ENCODE measurements at regions of chr3 and their contacts with region 1.

Region 1: DNA sequence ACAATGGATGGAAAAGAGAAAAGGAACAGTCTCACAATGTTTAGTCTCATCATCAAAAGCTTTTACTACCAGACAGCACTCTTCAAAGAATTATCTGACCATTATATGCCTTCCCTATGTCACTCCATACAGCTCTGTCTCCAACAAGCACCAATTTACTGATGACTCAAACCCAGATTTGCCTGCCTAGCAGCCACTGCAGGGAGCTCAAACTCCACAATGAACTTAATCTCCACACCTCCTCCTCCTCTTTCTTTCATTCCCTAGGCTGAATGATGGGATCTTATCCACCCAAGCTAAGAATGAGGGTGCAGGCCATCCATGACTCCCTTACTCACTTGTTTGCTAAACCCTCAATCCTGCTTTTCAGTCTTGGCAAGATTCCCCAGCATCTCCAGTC is 45.5 kb downstream of the NBEAL2 start:
- DNase-seq: no peak
- H3K4me3 ChIP-seq: no peak overlapping the region
- H3K27ac ChIP-seq: no peak overlapping the region
- H3K4me1 ChIP-seq: peaks cover 0 to 10% (median 3%) of the 10 kb centered on the region in 4 experiments
- H3K27me3 ChIP-seq: no peaks in the 10 kb centered on the region

Region 2: GRCh38 chr3:46998121-46998851 is 26.6 kb before region 1 on chr3:
- CTCF ChIA-PET with region 1: no interaction called
- POLR2A ChIA-PET with region 1: no interaction called
- DNase-seq: peak; percentile 75 to 81 (median 77)
- H3K4me3 ChIP-seq: no peak overlapping the region
- H3K27ac ChIP-seq: no peak overlapping the region
- H3K4me1 ChIP-seq: peaks cover 0 to 35% (median 19%) of the 10 kb centered on the region in 4 experiments
- H3K27me3 ChIP-seq: no peaks in the 10 kb centered on the region

Region 3: DNA sequence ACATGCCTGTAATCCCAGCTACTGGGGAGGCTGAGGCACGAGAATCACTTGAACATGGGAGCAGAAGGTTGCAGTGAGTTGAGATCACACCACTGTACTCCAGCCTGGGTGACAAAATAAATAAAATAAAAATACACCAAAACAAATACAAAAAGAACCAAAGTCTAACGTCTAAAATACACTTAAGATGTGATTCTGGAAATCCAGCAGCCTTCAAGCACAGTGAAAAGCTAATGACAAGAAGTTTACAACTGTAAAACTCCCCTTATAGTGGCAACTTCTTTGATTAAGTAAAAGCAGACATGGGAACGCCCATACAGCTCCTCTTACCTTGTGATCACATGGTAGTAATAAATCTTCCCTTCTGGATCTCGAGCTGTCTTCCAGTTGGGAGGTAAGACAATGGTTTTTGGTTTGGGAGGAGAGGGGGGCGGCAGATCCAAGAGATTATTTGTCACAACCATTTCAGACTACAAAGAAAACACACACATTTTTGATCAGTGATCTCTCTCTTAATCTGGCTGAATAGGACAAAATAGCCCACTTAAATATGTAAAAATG is 17.4 kb after region 1 on chr3:
- CTCF ChIA-PET with region 1: interaction called, 17 read pairs
- POLR2A ChIA-PET with region 1: no interaction called
- DNase-seq: no peak
- H3K4me3 ChIP-seq: no peak overlapping the region
- H3K27ac ChIP-seq: peak overlapping the region in 1 of 2 experiments; percentile 45
- H3K4me1 ChIP-seq: peaks cover 0 to 8% (median 6%) of the 10 kb centered on the region in 4 experiments
- H3K27me3 ChIP-seq: no peaks in the 10 kb centered on the region

Region 4: GRCh38 chr3:47152578-47152977 is 127.6 kb after region 1 on chr3:
- CTCF ChIA-PET with region 1: no interaction called
- POLR2A ChIA-PET with region 1: no interaction called
- DNase-seq: peak in 2 of 3 donors; percentile 32 to 48
- H3K4me3 ChIP-seq: peak overlapping the region in 1 of 7 experiments; percentile 36
- H3K27ac ChIP-seq: peak overlapping the region in 1 of 2 experiments; percentile 47
- H3K4me1 ChIP-seq: peaks cover 0 to 26% (median 17%) of the 10 kb centered on the region in 4 experiments
- H3K27me3 ChIP-seq: no peaks in the 10 kb centered on the region